Ascending aorta (tissue), 2 donors: ENCODE measurements at regions of chr13 and their contacts with region 1.

Region 1: DNA sequence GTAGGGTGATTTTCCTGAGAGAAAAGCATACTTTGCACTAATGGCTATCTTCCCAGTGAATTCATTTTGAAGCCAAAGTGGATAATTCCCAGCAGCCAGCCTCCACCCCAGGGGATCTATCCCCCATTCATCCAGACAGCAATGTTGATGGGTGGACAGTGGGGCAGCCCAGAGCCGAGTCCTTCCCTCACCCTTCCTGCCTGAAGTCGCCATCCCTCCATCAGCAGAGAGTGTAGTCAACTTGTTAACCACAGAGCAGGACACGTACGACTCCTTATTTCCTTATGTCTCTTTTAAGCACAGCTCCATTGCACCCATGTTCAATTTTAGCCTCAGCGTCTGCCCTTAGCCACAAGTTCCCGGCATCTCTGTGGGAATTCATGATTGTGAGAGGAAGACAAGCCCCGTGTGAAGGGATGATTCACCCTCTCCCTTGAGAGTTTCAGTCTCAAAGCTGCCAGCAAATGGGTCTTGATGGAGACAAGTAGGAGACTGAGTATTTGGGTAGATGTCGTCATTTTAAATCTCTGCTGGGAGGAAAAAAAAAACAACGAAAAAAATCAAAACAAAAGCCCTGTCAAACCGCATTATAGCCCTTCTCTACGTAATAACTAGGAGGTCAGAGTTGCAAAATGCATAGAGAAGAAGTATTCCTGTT is 58.3 kb upstream of the MEDAG start:
- DNase-seq: peak; percentile 48 to 90
- H3K4me3 ChIP-seq: peak overlapping the region in 1 of 2 donors; percentile 1
- H3K27ac ChIP-seq: peak overlapping the region; percentile 74 to 87
- H3K4me1 ChIP-seq: peaks cover 0 to 7% of the 10 kb centered on the region in 2 donors
- H3K27me3 ChIP-seq: no peaks in the 10 kb centered on the region
- CTCF ChIP-seq: no peak

Region 2: GRCh38 chr13:30617315-30618185 is 230.2 kb before region 1 on chr13 and contains the start of gene USPL1:
- intact Hi-C with region 1: no loop called
- DNase-seq: peak; percentile 92 to 98
- H3K4me3 ChIP-seq: peak within 1 kb of the TSS; percentile 77 to 81
- H3K27ac ChIP-seq: peak within 1 kb of the TSS; percentile 99 to 100
- H3K4me1 ChIP-seq: peaks cover 0 to 21% of the 10 kb centered on the region in 2 donors
- H3K27me3 ChIP-seq: no peaks in the 10 kb centered on the region
- CTCF ChIP-seq: peak; percentile 19 to 63 (median 20)
- total RNA-seq, gene USPL1: 4.0 TPM

Region 3: DNA sequence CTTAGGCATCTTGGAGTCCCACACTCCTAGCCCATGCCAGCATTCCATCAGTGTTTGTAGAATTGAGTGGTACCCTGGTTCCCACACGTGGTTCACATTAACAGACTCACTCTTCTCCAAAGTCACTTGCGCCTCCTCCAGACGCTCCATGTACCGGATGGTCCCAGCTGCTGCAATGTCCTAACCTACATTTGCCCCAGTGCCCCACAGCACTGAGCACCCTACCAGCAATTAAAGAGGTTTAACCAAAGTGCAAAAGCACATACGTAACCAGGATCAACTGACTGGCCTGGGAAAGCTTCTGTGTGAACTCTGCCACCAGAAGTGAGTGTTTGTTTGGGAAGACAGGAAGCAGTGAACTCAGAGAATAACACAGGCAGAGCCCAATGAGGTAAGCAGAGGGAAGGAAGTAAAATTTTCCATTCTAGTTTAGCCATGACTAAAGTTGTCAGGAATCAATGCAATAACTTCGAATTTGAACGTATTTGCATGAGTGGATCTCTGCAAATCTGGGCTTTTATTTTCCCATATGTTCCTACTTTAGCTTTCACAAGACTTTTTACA is 51.0 kb after region 1 on chr13:
- intact Hi-C with region 1: loop called (anchors 2 kb)
- DNase-seq: peak; percentile 54 to 94
- H3K4me3 ChIP-seq: peak overlapping the region in 1 of 2 donors; percentile 42
- H3K27ac ChIP-seq: peak overlapping the region; percentile 98 to 99
- H3K4me1 ChIP-seq: peaks cover 24 to 52% of the 10 kb centered on the region in 2 donors
- H3K27me3 ChIP-seq: no peaks in the 10 kb centered on the region
- CTCF ChIP-seq: peak in 1 of 3 experiments; percentile 12

Region 4: GRCh38 chr13:30978981-30979956 is 131.5 kb after region 1 on chr13:
- intact Hi-C with region 1: loop called (anchors 10 kb)
- DNase-seq: no peak
- H3K4me3 ChIP-seq: no peak overlapping the region
- H3K27ac ChIP-seq: no peak overlapping the region
- H3K4me1 ChIP-seq: peaks cover 0 to 14% of the 10 kb centered on the region in 2 donors
- H3K27me3 ChIP-seq: no peaks in the 10 kb centered on the region
- CTCF ChIP-seq: peak in 1 of 3 experiments; percentile 44